ENCODE measurements at regions of chr7 and their contacts with region 1.

Region 1: GRCh38 chr7:149248777-149249176 is 9.3 kb downstream of the ZNF212 start:
- DNase-seq: no peak
- H3K4me3 ChIP-seq: no peak overlapping the region
- H3K27ac ChIP-seq: no peak overlapping the region
- H3K4me1 ChIP-seq: no peaks in the 10 kb centered on the region
- H3K27me3 ChIP-seq: no peaks in the 10 kb centered on the region
- CTCF ChIP-seq: no peak

Region 2: DNA sequence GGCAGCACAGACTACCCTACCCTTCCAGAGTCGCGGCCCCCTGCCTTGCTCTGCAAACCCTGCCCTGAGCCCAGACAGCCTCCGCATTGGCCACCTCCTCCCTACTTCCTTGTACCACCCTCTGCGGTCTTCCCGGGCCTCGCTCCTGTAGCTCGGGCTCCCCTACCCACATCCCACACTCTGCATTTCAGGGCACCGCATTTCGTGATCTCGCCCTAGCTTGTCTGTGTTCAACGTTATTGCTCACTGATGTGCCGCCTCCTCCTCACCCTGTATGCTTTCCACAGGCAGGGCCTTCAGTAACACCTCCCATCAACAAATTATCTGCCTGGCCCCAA is 227.1 kb before region 1 on chr7:
- CTCF ChIA-PET with region 1: interaction called, 17 read pairs
- POLR2A ChIA-PET with region 1: no interaction called
- intact Hi-C with region 1: no loop called
- DNase-seq: no peak
- H3K4me3 ChIP-seq: no peak overlapping the region
- H3K27ac ChIP-seq: no peak overlapping the region
- H3K4me1 ChIP-seq: peaks cover 9% of the 10 kb centered on the region
- H3K27me3 ChIP-seq: no peaks in the 10 kb centered on the region
- CTCF ChIP-seq: no peak

Region 3: DNA sequence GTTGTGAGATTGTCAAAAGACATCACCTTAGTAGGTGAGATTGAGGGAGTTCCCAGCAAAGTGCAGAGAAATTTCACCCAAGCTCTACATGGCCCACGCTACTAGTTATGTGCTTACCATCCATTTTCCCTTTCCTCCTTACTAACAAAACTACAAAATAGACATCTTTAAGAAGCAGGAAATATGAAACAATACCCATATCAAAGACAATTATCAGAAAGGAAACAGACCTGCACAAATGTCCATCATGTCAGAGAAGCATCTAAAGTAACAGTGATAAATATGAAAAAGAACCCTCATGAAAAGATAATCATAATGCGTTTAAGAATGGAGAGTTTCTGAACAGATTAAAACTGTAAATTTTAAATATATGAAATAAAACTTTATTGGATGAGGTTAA is 1346.6 kb after region 1 on chr7:
- CTCF ChIA-PET with region 1: no interaction called
- POLR2A ChIA-PET with region 1: no interaction called
- intact Hi-C with region 1: no loop called
- DNase-seq: no peak
- H3K4me3 ChIP-seq: no peak overlapping the region
- H3K27ac ChIP-seq: no peak overlapping the region
- H3K4me1 ChIP-seq: no peaks in the 10 kb centered on the region
- H3K27me3 ChIP-seq: peaks cover 30% of the 10 kb centered on the region
- CTCF ChIP-seq: no peak